ENCODE measurements at regions of chr20 and their contacts with region 1.

Region 1: DNA sequence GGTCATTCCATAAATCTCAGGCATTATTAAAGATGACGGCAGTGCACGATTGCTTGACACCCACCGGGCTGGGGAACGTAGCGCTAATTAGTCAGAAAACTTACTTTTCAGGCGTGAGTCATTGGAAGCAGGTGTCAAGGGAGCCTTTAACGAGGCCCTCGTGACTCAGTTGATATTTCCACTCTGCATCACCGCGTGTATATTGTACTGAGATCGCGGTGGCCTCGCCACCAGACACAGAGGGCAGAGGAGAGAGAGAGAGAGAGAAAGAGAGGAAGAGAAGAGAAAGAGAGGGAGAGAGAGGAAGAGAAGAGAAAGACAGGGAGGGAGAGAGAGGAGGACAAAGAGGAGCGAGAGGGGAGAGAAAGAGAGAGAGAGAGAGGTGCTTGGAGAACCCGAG is 21.1 kb downstream of the KCNG1 start:
- DNase-seq: no peak

Region 2: DNA sequence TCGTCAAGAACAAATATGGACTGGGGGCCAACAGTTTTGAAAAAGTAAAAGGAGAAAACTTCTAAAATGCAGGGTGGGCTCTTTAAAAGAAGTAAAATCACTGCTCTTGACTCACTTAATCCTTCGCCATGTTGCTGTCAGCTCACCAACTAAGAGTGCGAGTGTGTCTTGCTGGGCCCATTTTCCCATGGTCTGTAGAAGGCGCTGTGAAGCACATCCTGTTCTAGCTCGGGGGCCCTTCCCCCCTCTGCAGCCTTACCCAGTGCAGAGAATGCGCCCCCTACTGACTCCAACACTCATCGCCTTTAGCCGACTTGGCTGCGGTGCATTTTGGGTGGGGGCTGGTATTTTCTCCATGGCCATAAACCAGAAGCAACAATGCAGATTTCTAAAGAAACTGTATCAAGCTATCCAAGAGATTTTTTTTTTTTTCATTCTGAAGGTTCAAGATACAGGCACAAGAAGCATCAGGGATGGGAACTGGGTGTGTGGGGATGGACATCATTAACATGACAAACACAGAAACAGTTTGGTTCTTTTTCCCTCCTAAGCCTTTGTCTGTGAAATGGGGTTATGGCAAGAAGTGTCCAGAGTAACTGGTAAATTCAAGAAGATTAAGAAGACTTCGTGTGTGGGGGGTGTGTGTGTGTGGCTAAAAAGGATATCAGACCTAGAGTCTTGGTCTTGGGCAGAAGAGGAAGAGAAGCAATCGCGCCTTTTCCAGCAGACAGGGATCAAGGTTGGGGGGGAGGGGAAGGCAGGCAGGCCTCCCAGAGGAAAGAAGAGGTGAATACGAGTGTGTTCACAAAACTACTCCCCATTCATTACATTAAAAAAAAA is 72.2 kb before region 1 on chr20:
- in situ Hi-C with region 1: no loop called
- DNase-seq: peak; percentile 88

Region 3: GRCh38 chr20:51326201-51326819 is 324.6 kb after region 1 on chr20:
- in situ Hi-C with region 1: loop called (anchors 10 kb)
- DNase-seq: peak; percentile 58